CD8-positive, alpha-beta T cell (primary cell): ENCODE measurements at regions of chr6 and their contacts with region 1.

Region 1: DNA sequence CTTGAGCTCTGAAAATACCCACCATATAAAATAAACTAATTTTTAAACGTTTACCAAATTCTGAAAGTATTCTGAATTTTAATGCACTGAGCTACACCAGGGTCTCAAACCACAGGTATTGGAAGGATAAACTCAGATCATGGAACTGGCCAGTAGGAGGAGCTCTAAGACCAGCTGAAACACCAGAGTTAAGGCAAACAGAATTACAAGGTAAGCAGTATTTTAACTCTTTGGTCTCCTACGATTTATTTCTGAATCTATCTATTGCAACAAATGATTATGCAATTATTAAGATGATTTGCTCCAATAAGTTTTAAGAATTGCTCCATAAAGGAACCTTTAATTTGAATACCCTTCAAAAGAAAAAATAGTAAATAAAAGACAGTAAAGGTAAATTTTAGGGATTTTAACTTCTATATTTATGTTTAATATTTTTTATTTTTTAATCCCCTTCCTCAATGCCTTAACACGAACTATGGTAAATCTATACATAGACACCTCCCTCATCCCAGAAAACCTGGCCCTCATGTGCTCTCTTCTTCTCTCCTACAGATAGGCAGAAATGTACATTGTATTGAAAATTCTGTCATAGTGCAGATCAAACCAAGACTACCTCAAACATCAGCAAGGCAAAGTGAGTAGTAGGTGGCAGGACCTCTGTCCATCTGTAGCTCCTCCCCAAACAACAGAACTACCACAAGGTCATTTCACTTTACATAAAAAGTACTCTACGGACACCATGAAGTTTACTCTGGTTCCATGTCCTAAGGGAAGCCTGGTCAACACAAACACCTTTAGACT is 58.4 kb downstream of the SMLR1 start:
- DNase-seq: peak; percentile 50 to 86 (median 73)
- ATAC-seq: peak; percentile 91
- H3K4me3 ChIP-seq: no peak overlapping the region
- H3K4me3 Mint-ChIP-seq: no peak overlapping the region
- H3K27ac ChIP-seq: no peak overlapping the region
- H3K27ac Mint-ChIP-seq: no peak overlapping the region
- H3K4me1 ChIP-seq: no peaks in the 10 kb centered on the region
- H3K4me1 Mint-ChIP-seq: no peaks in the 10 kb centered on the region
- H3K27me3 ChIP-seq: no peaks in the 10 kb centered on the region
- H3K27me3 Mint-ChIP-seq: no peaks in the 10 kb centered on the region
- CTCF ChIP-seq: peak; percentile 97

Region 2: GRCh38 chr6:130730600-130730999 is 155.0 kb before region 1 on chr6:
- CTCF ChIA-PET with region 1: no interaction called
- POLR2A ChIA-PET with region 1: no interaction called
- intact Hi-C with region 1: no loop called
- DNase-seq: no peak
- ATAC-seq: no peak
- H3K4me3 ChIP-seq: no peak overlapping the region
- H3K4me3 Mint-ChIP-seq: no peak overlapping the region
- H3K27ac ChIP-seq: no peak overlapping the region
- H3K27ac Mint-ChIP-seq: no peak overlapping the region
- H3K4me1 ChIP-seq: no peaks in the 10 kb centered on the region
- H3K4me1 Mint-ChIP-seq: peaks cover 4% of the 10 kb centered on the region
- H3K27me3 ChIP-seq: no peaks in the 10 kb centered on the region
- H3K27me3 Mint-ChIP-seq: no peaks in the 10 kb centered on the region
- CTCF ChIP-seq: no peak

Region 3: GRCh38 chr6:131063028-131063763 is 177.6 kb after region 1 on chr6 and contains the start of gene EPB41L2:
- CTCF ChIA-PET with region 1: interaction called, 3 read pairs
- POLR2A ChIA-PET with region 1: no interaction called
- intact Hi-C with region 1: loop called in 1 of 2 experiments (anchors 1 kb)
- DNase-seq: peak; percentile 55 to 92 (median 79)
- ATAC-seq: peak; percentile 91
- H3K4me3 ChIP-seq: peak within 1 kb of the TSS; percentile 57 to 80
- H3K4me3 Mint-ChIP-seq: peak within 1 kb of the TSS; percentile 89
- H3K27ac ChIP-seq: peak within 1 kb of the TSS in 1 of 2 experiments; percentile 49
- H3K27ac Mint-ChIP-seq: peak within 1 kb of the TSS; percentile 76
- H3K4me1 ChIP-seq: peaks cover 10% of the 10 kb centered on the region
- H3K4me1 Mint-ChIP-seq: peaks cover 27% of the 10 kb centered on the region
- H3K27me3 ChIP-seq: no peaks in the 10 kb centered on the region
- H3K27me3 Mint-ChIP-seq: no peaks in the 10 kb centered on the region
- CTCF ChIP-seq: peak; percentile 18
- total RNA-seq, gene EPB41L2: 11.0 to 12.0 TPM

Region 4: DNA sequence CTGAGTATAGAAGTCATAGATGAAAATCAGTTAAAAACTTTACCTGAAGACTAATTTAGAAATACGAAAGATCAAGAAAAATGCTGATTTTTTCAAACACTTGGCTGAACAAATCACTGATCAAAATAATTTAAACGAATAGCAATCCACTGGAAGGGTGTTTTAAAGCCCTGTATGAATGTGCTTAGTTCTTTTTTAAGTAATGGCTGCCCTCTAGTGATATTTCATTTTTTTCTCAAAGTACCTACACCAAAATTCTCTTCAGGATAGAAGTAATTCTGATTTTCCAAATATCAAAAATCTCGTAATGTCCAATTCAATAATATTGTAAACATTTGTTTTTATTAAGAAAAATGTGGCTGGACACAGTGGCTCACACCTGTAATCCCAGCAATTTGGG is 282.2 kb after region 1 on chr6:
- CTCF ChIA-PET with region 1: interaction called, 8 read pairs
- POLR2A ChIA-PET with region 1: no interaction called
- intact Hi-C with region 1: loop called in 1 of 2 experiments (anchors 2 kb)
- DNase-seq: no peak
- ATAC-seq: no peak
- H3K4me3 ChIP-seq: no peak overlapping the region
- H3K4me3 Mint-ChIP-seq: no peak overlapping the region
- H3K27ac ChIP-seq: no peak overlapping the region
- H3K27ac Mint-ChIP-seq: no peak overlapping the region
- H3K4me1 ChIP-seq: no peaks in the 10 kb centered on the region
- H3K4me1 Mint-ChIP-seq: no peaks in the 10 kb centered on the region
- H3K27me3 ChIP-seq: no peaks in the 10 kb centered on the region
- H3K27me3 Mint-ChIP-seq: no peaks in the 10 kb centered on the region
- CTCF ChIP-seq: no peak

Region 5: GRCh38 chr6:131303338-131303954 is 417.9 kb after region 1 on chr6:
- CTCF ChIA-PET with region 1: no interaction called
- POLR2A ChIA-PET with region 1: no interaction called
- intact Hi-C with region 1: loop called in 1 of 2 experiments (anchors 10 kb)
- DNase-seq: no peak
- ATAC-seq: no peak
- H3K4me3 ChIP-seq: no peak overlapping the region
- H3K4me3 Mint-ChIP-seq: no peak overlapping the region
- H3K27ac ChIP-seq: no peak overlapping the region
- H3K27ac Mint-ChIP-seq: no peak overlapping the region
- H3K4me1 ChIP-seq: no peaks in the 10 kb centered on the region
- H3K4me1 Mint-ChIP-seq: peaks cover 18% of the 10 kb centered on the region
- H3K27me3 ChIP-seq: no peaks in the 10 kb centered on the region
- H3K27me3 Mint-ChIP-seq: no peaks in the 10 kb centered on the region
- CTCF ChIP-seq: no peak

Region 6: DNA sequence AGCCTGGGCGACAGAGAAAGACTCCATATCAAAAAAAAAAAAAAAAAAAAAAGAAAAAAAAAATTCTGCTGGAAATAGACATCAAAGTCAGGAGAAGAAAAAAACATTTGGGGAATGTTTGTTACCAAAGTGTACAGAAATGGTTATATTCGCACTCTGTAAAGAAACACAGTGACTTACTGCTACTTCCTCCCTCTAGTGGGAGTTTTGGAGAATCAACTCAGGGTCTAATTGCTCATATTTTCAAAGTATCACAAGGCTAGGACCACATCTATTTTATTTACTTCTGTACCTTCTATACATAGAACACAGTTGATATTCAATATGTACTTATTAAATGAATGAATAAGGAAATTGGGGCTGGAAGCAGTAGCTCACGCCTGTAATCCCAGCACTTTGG is 711.9 kb after region 1 on chr6:
- CTCF ChIA-PET with region 1: interaction called, 7 read pairs
- POLR2A ChIA-PET with region 1: no interaction called
- intact Hi-C with region 1: loop called in 1 of 2 experiments (anchors 1 kb)
- DNase-seq: peak in 2 of 9 experiments; percentile 20 to 33
- ATAC-seq: peak; percentile 59
- H3K4me3 ChIP-seq: no peak overlapping the region
- H3K4me3 Mint-ChIP-seq: no peak overlapping the region
- H3K27ac ChIP-seq: no peak overlapping the region
- H3K27ac Mint-ChIP-seq: peak overlapping the region; percentile 27
- H3K4me1 ChIP-seq: no peaks in the 10 kb centered on the region
- H3K4me1 Mint-ChIP-seq: peaks cover 4% of the 10 kb centered on the region
- H3K27me3 ChIP-seq: no peaks in the 10 kb centered on the region
- H3K27me3 Mint-ChIP-seq: no peaks in the 10 kb centered on the region
- CTCF ChIP-seq: peak; percentile 43

Region 7: GRCh38 chr6:132300323-132300949 is 1414.8 kb after region 1 on chr6:
- CTCF ChIA-PET with region 1: no interaction called
- POLR2A ChIA-PET with region 1: no interaction called
- intact Hi-C with region 1: loop called in 1 of 2 experiments (anchors 5 kb)
- DNase-seq: peak in 2 of 9 experiments; percentile 35 to 39
- ATAC-seq: no peak
- H3K4me3 ChIP-seq: no peak overlapping the region
- H3K4me3 Mint-ChIP-seq: no peak overlapping the region
- H3K27ac ChIP-seq: no peak overlapping the region
- H3K27ac Mint-ChIP-seq: no peak overlapping the region
- H3K4me1 ChIP-seq: no peaks in the 10 kb centered on the region
- H3K4me1 Mint-ChIP-seq: no peaks in the 10 kb centered on the region
- H3K27me3 ChIP-seq: no peaks in the 10 kb centered on the region
- H3K27me3 Mint-ChIP-seq: peaks cover 13% of the 10 kb centered on the region
- CTCF ChIP-seq: peak; percentile 24